Right ventricle myocardium superior (tissue), 1 donor: ENCODE measurements at regions of chr18 and their contacts with region 1.

Region 1: DNA sequence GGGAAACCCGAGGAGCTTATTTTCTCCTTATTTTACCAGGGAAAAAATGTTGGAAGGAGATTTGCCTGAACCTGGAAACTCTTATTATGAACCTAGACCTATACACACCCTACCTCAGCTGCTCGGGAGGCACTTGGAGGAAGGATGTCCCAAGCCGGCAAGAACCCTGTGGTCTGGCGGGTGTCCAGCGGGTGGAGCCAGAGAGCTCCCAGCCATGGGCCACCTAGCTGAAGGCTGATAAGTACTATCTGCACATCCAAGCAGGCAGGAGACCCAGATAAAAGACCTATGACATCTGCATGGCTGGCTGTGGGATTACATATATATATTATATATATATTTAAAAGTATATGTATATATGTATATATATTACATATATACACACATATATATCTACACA is 1.1 kb upstream of the SLC14A1 start:
- DNase-seq: peak; percentile 82
- ATAC-seq: peak; percentile 78

Region 2: GRCh38 chr18:45657357-45658335 is 65.3 kb before region 1 on chr18:
- intact Hi-C with region 1: no loop called
- DNase-seq: no peak
- ATAC-seq: no peak

Region 3: GRCh38 chr18:45839414-45840395 is 116.8 kb after region 1 on chr18:
- intact Hi-C with region 1: loop called (anchors 2 kb)
- DNase-seq: no peak
- ATAC-seq: peak; percentile 77